RWPE1 (cell line): ENCODE measurements at regions of chr5 and their contacts with region 1.

Region 1: DNA sequence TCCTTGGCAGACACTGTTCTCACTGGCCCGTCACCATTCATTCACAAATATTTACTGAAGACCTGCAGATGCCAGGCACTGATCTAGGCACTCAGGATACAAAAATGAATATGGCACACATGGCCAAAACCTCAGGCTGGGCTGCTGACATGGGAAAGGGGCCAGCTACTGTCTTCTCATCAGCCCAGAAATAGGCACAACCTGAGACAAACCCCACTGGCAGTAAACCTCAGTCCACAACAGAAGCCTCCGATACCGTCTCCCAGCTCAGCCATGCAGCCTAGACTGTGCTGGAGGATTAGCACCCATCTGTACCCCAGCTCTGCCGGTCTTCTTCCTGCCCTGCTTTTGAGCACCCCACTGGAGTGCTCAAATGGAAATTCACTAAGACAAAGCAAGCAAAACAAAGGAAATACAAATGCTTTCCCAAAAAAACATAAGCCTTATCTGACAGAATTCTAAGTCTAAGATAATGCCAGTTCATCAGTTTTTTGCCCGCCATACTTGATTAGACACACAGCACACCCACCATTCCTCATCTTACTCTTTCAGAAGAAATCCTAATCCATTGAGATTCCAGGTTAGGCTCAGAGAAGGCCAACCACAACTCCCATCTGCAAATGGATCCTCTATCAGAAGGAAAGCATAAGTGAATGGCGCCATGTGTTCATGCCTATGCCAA is 8.2 kb downstream of the P4HA2 start:
- DNase-seq: no peak
- H3K27ac ChIP-seq: peak overlapping the region; percentile 66; the same call in 1 of the 2 replicates
- CTCF ChIP-seq: no peak

Region 2: DNA sequence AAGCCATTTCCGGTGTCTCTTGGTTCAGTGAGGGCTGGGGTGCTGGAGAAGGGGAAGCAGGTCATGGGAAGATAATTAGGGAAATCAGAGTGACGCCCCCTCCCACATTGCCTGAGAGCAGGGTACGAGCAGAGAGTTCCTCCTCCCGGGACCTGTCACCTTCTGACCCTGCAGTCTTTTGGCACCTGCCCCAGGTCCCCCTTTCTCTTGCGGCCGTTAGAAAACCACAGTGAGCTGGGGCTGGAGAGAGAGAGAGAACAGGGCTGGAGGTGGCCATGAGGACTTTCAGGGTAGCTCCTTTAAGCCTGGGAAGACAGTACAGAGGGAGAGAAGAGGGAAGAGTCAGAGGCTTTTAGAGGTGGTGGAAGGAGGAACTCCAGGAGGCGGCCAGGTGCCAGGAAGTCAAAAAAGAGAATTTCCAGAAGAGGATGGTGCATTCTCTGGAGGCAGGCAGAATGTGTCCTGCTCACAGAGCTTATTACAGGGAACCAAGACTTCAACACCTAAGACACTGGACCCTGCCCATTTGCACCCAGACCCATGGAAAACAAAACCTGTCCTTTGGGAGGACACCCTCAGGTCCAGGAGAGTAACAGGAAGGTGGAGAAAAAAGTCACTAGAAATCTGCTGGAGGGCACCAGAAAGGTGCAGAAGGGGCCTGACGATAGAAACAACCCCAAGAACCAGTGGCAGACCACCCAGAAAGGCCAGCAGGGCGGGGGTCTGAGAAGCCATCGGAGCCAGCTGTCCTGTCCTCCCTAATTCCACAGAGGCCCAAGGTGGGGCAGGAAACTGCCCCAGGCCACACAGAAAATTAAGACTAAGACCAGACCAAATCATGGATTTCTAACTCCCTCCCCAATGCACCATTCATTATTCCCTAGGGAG is 201.4 kb before region 1 on chr5:
- CTCF ChIA-PET with region 1: no interaction called
- POLR2A ChIA-PET with region 1: interaction called, 11 read pairs
- DNase-seq: no peak
- H3K27ac ChIP-seq: no peak overlapping the region
- CTCF ChIP-seq: no peak

Region 3: GRCh38 chr5:132301344-132302271 is 82.2 kb after region 1 on chr5:
- CTCF ChIA-PET with region 1: no interaction called
- POLR2A ChIA-PET with region 1: no interaction called
- DNase-seq: no peak
- H3K27ac ChIP-seq: peak overlapping the region; percentile 31
- CTCF ChIP-seq: no peak

Region 4: GRCh38 chr5:132540764-132541163 is 321.3 kb after region 1 on chr5:
- CTCF ChIA-PET with region 1: no interaction called
- POLR2A ChIA-PET with region 1: no interaction called
- DNase-seq: no peak
- H3K27ac ChIP-seq: no peak overlapping the region
- CTCF ChIP-seq: no peak